Endothelial cell of umbilical vein (primary cell): ENCODE measurements at regions of chr11 and their contacts with region 1.

Region 1: GRCh38 chr11:59787816-59788215 is 22.8 kb downstream of the MRPL16 start:
- DNase-seq: peak; percentile 84
- H3K4me3 ChIP-seq: no peak overlapping the region
- H3K27ac ChIP-seq: peak overlapping the region; percentile 86
- H3K4me1 ChIP-seq: peaks cover 27% of the 10 kb centered on the region
- H3K27me3 ChIP-seq: no peaks in the 10 kb centered on the region
- CTCF ChIP-seq: no peak
- POLR2A ChIP-seq: no peak

Region 2: DNA sequence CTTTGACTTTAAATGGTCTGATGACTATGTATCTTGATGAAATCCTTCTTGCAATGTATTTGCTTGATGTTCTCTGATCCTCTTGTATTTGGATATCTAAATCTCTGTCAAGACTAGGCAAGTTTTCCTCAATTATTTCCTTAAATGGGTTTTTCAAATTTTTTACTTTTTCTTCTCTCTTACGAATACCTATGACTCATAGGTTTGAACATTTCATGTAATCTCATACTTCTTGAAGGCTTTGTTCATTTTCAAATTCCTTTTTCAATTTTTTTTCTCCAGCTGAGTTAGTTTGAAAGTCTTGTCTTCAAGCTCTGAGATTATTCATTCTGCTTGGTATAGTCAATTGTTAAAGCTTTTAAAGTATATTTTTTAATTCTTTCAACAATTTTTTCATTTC is 1532.9 kb before region 1 on chr11:
- CTCF ChIA-PET with region 1: no interaction called
- POLR2A ChIA-PET with region 1: no interaction called
- dilution Hi-C with region 1: no loop called
- intact Hi-C with region 1: no loop called
- DNase-seq: no peak
- H3K4me3 ChIP-seq: no peak overlapping the region
- H3K27ac ChIP-seq: no peak overlapping the region
- H3K4me1 ChIP-seq: no peaks in the 10 kb centered on the region
- H3K27me3 ChIP-seq: no peaks in the 10 kb centered on the region
- CTCF ChIP-seq: no peak
- POLR2A ChIP-seq: no peak

Region 3: GRCh38 chr11:59776210-59777066 is 11.4 kb before region 1 on chr11:
- CTCF ChIA-PET with region 1: interaction called, 7 read pairs
- POLR2A ChIA-PET with region 1: no interaction called
- dilution Hi-C with region 1: no loop called
- intact Hi-C with region 1: loop called (anchors 1 kb)
- DNase-seq: peak; percentile 88
- H3K4me3 ChIP-seq: no peak overlapping the region
- H3K27ac ChIP-seq: peak overlapping the region; percentile 31
- H3K4me1 ChIP-seq: peaks cover 31% of the 10 kb centered on the region
- H3K27me3 ChIP-seq: no peaks in the 10 kb centered on the region
- CTCF ChIP-seq: no peak
- POLR2A ChIP-seq: no peak

Region 4: GRCh38 chr11:59967677-59968394 is 180.0 kb after region 1 on chr11:
- CTCF ChIA-PET with region 1: no interaction called
- POLR2A ChIA-PET with region 1: no interaction called
- dilution Hi-C with region 1: no loop called
- intact Hi-C with region 1: no loop called
- DNase-seq: no peak
- H3K4me3 ChIP-seq: no peak overlapping the region
- H3K27ac ChIP-seq: no peak overlapping the region
- H3K4me1 ChIP-seq: no peaks in the 10 kb centered on the region
- H3K27me3 ChIP-seq: peaks cover 2 to 6% of the 10 kb centered on the region in 2 experiments
- CTCF ChIP-seq: no peak
- POLR2A ChIP-seq: no peak